Activated naive CD4-positive, alpha-beta T cell treated with anti-CD3 and anti-CD28 coated beads, Interleukin-2, amount 10 ng/mL, durations not matched to agents 7 days and 5 days (primary cell): ENCODE measurements at regions of chr11 and their contacts with region 1.

Region 1: DNA sequence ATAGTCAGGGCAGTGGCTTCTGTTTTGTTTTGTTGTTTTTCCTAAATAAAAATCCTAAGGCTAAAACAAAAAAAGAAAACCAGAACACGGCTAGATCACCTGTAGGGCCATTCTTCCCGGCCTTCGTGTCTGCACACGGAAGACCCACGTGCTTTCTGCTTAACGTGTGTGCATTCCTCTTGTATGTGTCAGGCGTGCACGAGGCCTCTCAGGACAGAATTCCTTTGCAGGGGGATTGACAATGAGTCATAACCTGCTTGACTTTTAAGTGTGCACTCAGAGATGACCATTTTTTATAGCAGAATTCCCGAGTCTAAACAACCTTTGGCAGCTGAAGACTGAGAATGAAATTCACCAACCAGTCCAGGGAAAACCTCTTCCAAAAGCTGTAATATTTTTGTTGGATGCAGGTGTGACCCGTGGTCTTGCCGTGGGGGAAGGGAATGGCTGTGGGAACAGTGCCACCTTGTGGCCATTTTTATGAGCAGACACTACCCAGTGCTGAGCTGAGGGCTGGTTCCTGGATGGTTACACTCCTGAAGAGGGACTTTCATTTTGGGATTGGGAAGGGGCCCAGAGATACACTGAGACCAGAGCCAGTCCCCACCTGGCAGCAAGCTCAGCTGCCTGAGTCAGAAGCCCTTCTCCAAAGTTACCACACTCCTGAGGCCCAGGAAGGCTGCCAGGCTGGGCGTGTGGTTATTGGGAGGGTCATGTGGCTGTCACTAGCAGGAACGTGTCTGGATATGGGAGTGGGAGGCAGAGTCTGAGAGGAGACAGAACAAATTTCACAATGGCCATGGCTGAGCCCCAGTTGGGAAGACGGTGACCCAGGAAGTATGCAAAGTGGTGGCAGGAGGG is 35.8 kb upstream of the DKK3 start:
- DNase-seq: peak; percentile 72
- H3K4me3 Mint-ChIP-seq: no peak overlapping the region
- H3K27ac Mint-ChIP-seq: no peak overlapping the region
- H3K4me1 Mint-ChIP-seq: peaks cover 4% of the 10 kb centered on the region
- H3K27me3 Mint-ChIP-seq: peaks cover 48% of the 10 kb centered on the region

Region 2: GRCh38 chr11:11798586-11799438 is 245.4 kb before region 1 on chr11:
- CTCF ChIA-PET with region 1: interaction called, 18 read pairs
- DNase-seq: peak; percentile 85
- H3K4me3 Mint-ChIP-seq: no peak overlapping the region
- H3K27ac Mint-ChIP-seq: no peak overlapping the region
- H3K4me1 Mint-ChIP-seq: no peaks in the 10 kb centered on the region
- H3K27me3 Mint-ChIP-seq: peaks cover 19% of the 10 kb centered on the region

Region 3: GRCh38 chr11:11931461-11932055 is 112.6 kb before region 1 on chr11:
- CTCF ChIA-PET with region 1: interaction called, 26 read pairs
- DNase-seq: peak; percentile 20
- H3K4me3 Mint-ChIP-seq: no peak overlapping the region
- H3K27ac Mint-ChIP-seq: no peak overlapping the region
- H3K4me1 Mint-ChIP-seq: peaks cover 3% of the 10 kb centered on the region
- H3K27me3 Mint-ChIP-seq: no peaks in the 10 kb centered on the region

Region 4: GRCh38 chr11:12087075-12088004 is 43.2 kb after region 1 on chr11:
- CTCF ChIA-PET with region 1: interaction called, 22 read pairs
- DNase-seq: peak; percentile 75
- H3K4me3 Mint-ChIP-seq: peak overlapping the region; percentile 56
- H3K27ac Mint-ChIP-seq: peak overlapping the region; percentile 87
- H3K4me1 Mint-ChIP-seq: peaks cover 70% of the 10 kb centered on the region
- H3K27me3 Mint-ChIP-seq: no peaks in the 10 kb centered on the region

Region 5: GRCh38 chr11:12441231-12441861 is 397.2 kb after region 1 on chr11:
- CTCF ChIA-PET with region 1: no interaction called
- DNase-seq: no peak
- H3K4me3 Mint-ChIP-seq: no peak overlapping the region
- H3K27ac Mint-ChIP-seq: no peak overlapping the region
- H3K4me1 Mint-ChIP-seq: no peaks in the 10 kb centered on the region
- H3K27me3 Mint-ChIP-seq: peaks cover 5% of the 10 kb centered on the region